CD8-positive, alpha-beta T cell (primary cell): ENCODE measurements at regions of chr19 and their contacts with region 1.

Region 1: GRCh38 chr19:50537762-50538230 is 24.1 kb upstream of the ASPDH start:
- DNase-seq: peak in 8 of 9 experiments; percentile 35 to 71 (median 62)
- ATAC-seq: no peak
- H3K4me3 ChIP-seq: no peak overlapping the region
- H3K4me3 Mint-ChIP-seq: no peak overlapping the region
- H3K27ac ChIP-seq: no peak overlapping the region
- H3K27ac Mint-ChIP-seq: no peak overlapping the region
- H3K4me1 ChIP-seq: no peaks in the 10 kb centered on the region
- H3K4me1 Mint-ChIP-seq: peaks cover 3% of the 10 kb centered on the region
- H3K27me3 ChIP-seq: peaks cover 0 to 5% of the 10 kb centered on the region in 2 experiments
- H3K27me3 Mint-ChIP-seq: peaks cover 16% of the 10 kb centered on the region
- CTCF ChIP-seq: peak; percentile 62

Region 2: DNA sequence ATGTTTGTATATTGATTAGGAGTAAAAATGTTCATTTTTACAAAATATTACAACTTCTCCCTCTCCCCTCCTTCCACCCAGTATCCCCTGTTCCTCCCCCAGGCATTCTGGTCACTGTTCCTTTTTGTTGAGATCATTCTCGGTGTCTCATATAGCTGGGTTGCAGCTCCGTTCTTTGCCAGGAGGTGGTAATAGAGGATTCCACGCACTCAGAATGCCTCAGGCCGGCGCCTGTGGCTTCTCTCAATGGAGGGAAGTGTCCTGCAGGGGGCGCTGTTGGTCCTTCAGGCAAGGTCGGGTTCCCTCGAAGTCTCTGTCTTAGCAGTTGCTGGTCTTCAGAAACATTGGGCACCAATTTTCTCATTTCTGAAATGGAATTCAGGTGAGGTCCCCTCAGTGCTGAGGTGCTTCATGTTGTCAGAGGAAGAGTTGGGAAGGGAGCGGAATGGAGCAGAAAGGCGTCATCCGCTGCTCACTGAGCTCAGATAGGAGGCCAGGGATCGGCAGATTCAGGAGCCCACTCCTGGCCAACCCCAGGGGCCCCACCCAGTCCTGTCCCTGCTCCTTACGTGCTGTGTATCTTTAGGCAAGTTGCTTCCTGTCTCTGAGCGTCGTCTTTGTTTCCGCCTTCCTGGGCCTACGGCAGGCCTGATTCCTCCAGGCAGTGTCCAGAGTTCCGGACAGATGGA is 50.8 kb before region 1 on chr19:
- CTCF ChIA-PET with region 1: no interaction called
- POLR2A ChIA-PET with region 1: no interaction called
- intact Hi-C with region 1: no loop called
- DNase-seq: peak in 8 of 9 experiments; percentile 11 to 71 (median 52)
- ATAC-seq: peak; percentile 48
- H3K4me3 ChIP-seq: no peak overlapping the region
- H3K4me3 Mint-ChIP-seq: no peak overlapping the region
- H3K27ac ChIP-seq: no peak overlapping the region
- H3K27ac Mint-ChIP-seq: no peak overlapping the region
- H3K4me1 ChIP-seq: peaks cover 7% of the 10 kb centered on the region
- H3K4me1 Mint-ChIP-seq: peaks cover 24% of the 10 kb centered on the region
- H3K27me3 ChIP-seq: no peaks in the 10 kb centered on the region
- H3K27me3 Mint-ChIP-seq: no peaks in the 10 kb centered on the region
- CTCF ChIP-seq: peak; percentile 54

Region 3: DNA sequence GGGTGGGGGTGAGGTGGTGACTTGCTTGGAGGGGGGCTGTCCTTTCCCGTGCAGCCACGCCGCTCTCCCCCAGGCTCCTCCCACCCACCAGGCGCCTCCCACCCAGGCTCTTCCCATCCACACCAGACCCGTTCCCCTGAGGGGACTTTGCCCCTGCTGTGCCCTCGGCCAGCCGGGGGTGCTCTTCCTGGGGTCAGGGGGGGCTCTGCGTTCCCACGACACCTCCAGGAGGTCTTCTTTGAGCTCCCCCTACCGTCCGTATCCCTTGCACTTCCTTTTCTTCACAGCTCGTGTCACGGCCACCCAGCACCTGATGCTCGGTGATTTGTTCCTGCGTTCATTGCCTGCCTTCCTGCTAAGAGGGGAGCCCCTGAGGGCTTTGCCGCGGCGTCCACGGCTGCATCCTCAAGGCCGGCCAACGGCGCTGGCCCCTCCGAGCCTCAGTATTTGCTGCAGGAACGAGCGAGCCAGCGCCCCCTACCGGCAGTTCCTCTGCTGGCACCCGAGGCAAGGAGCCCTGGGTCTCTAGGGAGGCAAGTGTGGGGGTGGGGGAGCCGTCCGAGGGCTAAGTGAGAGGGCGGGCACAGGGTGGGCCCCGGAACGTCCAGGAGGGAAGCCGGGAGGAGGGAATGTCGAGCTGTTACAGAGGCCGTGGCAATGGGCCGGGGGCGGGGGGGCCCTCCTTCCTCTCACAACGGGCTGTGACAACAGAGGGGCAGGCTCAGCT is 18.6 kb after region 1 on chr19:
- CTCF ChIA-PET with region 1: interaction called, 17 read pairs
- POLR2A ChIA-PET with region 1: no interaction called
- intact Hi-C with region 1: no loop called
- DNase-seq: peak; percentile 53 to 82 (median 74)
- ATAC-seq: peak; percentile 73
- H3K4me3 ChIP-seq: peak overlapping the region; percentile 46 to 81
- H3K4me3 Mint-ChIP-seq: peak overlapping the region; percentile 87
- H3K27ac ChIP-seq: no peak overlapping the region
- H3K27ac Mint-ChIP-seq: no peak overlapping the region
- H3K4me1 ChIP-seq: peaks cover 8% of the 10 kb centered on the region
- H3K4me1 Mint-ChIP-seq: peaks cover 10% of the 10 kb centered on the region
- H3K27me3 ChIP-seq: peaks cover 13 to 17% of the 10 kb centered on the region in 2 experiments
- H3K27me3 Mint-ChIP-seq: peaks cover 60% of the 10 kb centered on the region
- CTCF ChIP-seq: peak; percentile 90

Region 4: GRCh38 chr19:50695251-50696093 is 157.7 kb after region 1 on chr19:
- CTCF ChIA-PET with region 1: no interaction called
- POLR2A ChIA-PET with region 1: no interaction called
- intact Hi-C with region 1: no loop called
- DNase-seq: peak in 3 of 9 experiments; percentile 33 to 52 (median 43)
- ATAC-seq: peak; percentile 54
- H3K4me3 ChIP-seq: no peak overlapping the region
- H3K4me3 Mint-ChIP-seq: no peak overlapping the region
- H3K27ac ChIP-seq: no peak overlapping the region
- H3K27ac Mint-ChIP-seq: no peak overlapping the region
- H3K4me1 ChIP-seq: no peaks in the 10 kb centered on the region
- H3K4me1 Mint-ChIP-seq: no peaks in the 10 kb centered on the region
- H3K27me3 ChIP-seq: peaks cover 16 to 27% of the 10 kb centered on the region in 2 experiments
- H3K27me3 Mint-ChIP-seq: peaks cover 59% of the 10 kb centered on the region
- CTCF ChIP-seq: no peak

Region 5: DNA sequence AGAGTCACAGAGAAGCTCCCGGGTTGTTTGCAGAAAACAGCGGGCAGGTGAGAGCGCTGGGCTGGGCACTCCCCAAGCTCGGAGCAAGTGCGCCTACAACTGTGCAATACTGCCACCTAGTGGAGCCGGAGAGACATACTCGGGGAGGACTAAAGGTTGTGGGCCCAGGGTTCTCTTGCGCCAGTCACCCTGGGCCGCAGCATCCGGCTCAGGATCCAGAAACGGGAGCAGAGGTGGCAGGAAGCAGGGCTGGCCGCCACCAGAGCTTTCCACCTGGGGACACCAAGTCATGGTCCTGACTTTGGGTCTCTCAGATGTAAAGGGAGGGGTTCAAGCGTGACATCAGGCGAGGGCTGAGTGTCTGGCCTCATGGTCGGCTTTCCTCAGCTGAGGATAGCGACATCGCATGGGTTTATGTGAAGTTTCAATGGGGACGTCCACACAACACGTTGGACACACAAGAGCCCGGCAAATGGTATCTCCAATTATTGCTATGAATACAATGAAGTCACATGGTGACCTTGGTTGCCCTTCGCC is 384.6 kb after region 1 on chr19:
- CTCF ChIA-PET with region 1: interaction called, 3 read pairs
- POLR2A ChIA-PET with region 1: no interaction called
- intact Hi-C with region 1: loop called in 1 of 2 experiments (anchors 1 kb)
- DNase-seq: peak; percentile 39 to 86 (median 73)
- ATAC-seq: peak; percentile 84
- H3K4me3 ChIP-seq: no peak overlapping the region
- H3K4me3 Mint-ChIP-seq: no peak overlapping the region
- H3K27ac ChIP-seq: no peak overlapping the region
- H3K27ac Mint-ChIP-seq: no peak overlapping the region
- H3K4me1 ChIP-seq: no peaks in the 10 kb centered on the region
- H3K4me1 Mint-ChIP-seq: peaks cover 4% of the 10 kb centered on the region
- H3K27me3 ChIP-seq: no peaks in the 10 kb centered on the region
- H3K27me3 Mint-ChIP-seq: peaks cover 35% of the 10 kb centered on the region
- CTCF ChIP-seq: peak; percentile 87